Tibial artery (tissue), 4 donors: ENCODE measurements at regions of chr3 and their contacts with region 1.

Region 1: DNA sequence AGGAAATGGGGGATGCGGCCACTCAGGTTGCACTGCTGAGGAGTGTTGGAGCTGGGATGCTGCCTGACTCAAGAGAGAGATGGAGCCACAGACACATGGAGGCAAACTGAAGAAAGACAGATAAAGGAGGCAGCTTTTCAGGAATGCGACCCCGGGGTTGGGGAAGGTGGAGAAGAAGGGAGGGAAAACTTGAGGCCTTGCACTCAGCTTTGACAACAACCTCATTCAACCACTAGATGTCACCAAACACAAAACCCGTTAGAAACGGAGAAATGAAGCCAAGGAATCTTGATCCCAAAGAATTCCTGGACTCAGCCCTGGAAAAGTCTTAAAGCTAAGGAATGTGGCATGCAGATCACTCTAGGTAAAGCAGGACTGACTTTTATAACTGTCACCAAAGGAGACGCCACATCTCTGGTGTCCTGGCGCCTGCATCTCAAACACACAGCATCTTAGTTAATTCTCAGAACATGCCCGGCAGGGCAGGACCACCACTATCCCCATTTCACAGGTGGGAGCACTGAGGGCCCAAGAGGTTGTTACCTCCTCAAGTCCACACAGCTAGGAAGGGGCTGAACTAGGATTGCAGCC is 59.6 kb upstream of the LMCD1 start:
- DNase-seq: no peak
- H3K4me3 ChIP-seq: no peak overlapping the region
- H3K27ac ChIP-seq: peak overlapping the region; percentile 73 to 86
- H3K4me1 ChIP-seq: peaks cover 8 to 50% (median 37%) of the 10 kb centered on the region in 4 donors
- H3K27me3 ChIP-seq: no peaks in the 10 kb centered on the region
- CTCF ChIP-seq: peak; percentile 85 to 86

Region 2: DNA sequence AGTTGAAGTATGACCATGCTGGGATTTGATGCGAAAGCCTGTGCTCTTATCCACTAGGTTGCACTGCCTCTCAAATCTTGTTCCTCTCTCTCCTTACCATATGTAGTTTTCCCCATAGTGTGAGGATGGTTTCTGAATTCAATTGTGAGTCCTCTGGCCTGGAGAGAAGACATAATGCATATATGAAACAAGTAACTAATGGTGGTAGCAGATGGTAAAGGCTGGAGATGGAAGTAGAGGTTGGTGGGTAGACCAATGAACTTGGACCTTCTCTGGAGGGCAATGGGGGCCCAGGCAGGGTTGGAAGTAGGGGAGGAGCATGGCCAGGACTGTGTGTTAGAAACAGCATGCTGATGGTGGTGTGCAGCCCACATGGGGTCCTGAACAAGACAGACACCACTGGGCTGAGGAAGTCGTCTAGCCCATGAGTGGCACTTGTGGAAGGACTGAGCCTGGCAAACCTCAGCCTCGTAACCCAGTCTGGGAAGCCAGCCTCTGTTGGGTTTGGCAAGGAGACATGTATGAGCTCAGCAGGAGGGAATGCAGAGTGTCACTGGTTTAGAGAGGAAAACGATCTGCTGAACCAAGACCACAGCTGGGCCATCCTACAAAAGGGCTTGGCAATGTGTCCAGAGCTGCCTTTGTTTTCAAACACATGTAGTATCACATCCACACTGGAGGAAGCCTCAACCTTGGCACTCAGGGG is 41.0 kb after region 1 on chr3:
- intact Hi-C with region 1: loop called (anchors 2 kb)
- DNase-seq: peak; percentile 72 to 91
- H3K4me3 ChIP-seq: no peak overlapping the region
- H3K27ac ChIP-seq: peak overlapping the region; percentile 81 to 88
- H3K4me1 ChIP-seq: peaks cover 0 to 75% (median 38%) of the 10 kb centered on the region in 4 donors
- H3K27me3 ChIP-seq: no peaks in the 10 kb centered on the region
- CTCF ChIP-seq: no peak

Region 3: DNA sequence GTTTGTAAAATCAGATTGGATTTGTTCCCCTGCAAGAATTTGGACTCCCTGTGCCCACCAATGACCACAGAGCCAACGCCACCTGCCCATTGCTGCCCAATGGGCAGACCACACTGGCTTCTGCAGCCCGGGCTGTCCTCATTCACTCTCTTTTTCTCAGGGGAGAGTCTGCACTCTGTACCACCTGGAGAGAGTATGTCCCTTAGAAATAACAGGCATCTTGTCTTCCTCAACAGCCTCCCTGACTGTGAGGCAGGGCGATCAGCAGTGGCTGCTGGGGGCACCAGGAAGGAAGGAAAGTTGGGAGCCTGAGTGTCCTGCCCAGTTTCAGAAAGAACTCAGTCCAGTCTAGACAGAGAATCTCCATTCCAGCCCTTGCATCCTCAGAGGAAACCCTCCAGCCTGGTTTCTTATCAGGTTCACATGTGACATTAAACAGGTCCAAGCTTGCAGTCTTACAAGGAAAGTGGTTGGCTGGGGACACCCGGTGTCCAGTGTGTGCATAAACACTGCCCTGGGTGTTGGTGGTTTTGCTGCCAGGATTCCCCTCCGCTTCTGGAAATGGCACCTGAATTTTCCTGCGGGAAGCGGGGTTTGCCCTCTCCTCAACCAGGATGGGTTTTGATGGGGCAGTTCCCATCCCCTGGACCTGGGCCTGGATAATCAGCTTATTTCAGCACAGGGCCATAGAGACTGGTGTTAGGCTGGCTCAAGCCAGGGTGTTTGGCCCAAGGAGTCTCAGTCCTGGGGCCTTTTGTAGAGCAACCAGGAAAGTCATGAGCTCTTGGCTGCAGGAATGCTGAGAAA is 165.4 kb after region 1 on chr3:
- intact Hi-C with region 1: loop called (anchors 5 kb)
- DNase-seq: peak; percentile 80 to 85
- H3K4me3 ChIP-seq: no peak overlapping the region
- H3K27ac ChIP-seq: peak overlapping the region; percentile 4 to 15
- H3K4me1 ChIP-seq: peaks cover 0 to 33% (median 25%) of the 10 kb centered on the region in 4 donors
- H3K27me3 ChIP-seq: no peaks in the 10 kb centered on the region
- CTCF ChIP-seq: peak; percentile 85 to 90

Region 4: GRCh38 chr3:8622873-8623691 is 181.0 kb after region 1 on chr3:
- intact Hi-C with region 1: loop called (anchors 5 kb)
- DNase-seq: peak; percentile 66 to 78
- H3K4me3 ChIP-seq: no peak overlapping the region
- H3K27ac ChIP-seq: no peak overlapping the region
- H3K4me1 ChIP-seq: peaks cover 0 to 42% (median 16%) of the 10 kb centered on the region in 4 donors
- H3K27me3 ChIP-seq: no peaks in the 10 kb centered on the region
- CTCF ChIP-seq: peak; percentile 88 to 91